ENCODE measurements at regions of chr14 and their contacts with region 1.

Region 1: GRCh38 chr14:73283608-73284379 is 46.5 kb downstream of the PAPLN start:
- DNase-seq: peak; percentile 18
- H3K4me3 ChIP-seq: no peak overlapping the region
- CTCF ChIP-seq: peak; percentile 61

Region 2: GRCh38 chr14:73223049-73223448 is 60.7 kb before region 1 on chr14:
- in situ Hi-C with region 1: no loop called
- DNase-seq: no peak
- H3K4me3 ChIP-seq: no peak overlapping the region
- CTCF ChIP-seq: no peak

Region 3: DNA sequence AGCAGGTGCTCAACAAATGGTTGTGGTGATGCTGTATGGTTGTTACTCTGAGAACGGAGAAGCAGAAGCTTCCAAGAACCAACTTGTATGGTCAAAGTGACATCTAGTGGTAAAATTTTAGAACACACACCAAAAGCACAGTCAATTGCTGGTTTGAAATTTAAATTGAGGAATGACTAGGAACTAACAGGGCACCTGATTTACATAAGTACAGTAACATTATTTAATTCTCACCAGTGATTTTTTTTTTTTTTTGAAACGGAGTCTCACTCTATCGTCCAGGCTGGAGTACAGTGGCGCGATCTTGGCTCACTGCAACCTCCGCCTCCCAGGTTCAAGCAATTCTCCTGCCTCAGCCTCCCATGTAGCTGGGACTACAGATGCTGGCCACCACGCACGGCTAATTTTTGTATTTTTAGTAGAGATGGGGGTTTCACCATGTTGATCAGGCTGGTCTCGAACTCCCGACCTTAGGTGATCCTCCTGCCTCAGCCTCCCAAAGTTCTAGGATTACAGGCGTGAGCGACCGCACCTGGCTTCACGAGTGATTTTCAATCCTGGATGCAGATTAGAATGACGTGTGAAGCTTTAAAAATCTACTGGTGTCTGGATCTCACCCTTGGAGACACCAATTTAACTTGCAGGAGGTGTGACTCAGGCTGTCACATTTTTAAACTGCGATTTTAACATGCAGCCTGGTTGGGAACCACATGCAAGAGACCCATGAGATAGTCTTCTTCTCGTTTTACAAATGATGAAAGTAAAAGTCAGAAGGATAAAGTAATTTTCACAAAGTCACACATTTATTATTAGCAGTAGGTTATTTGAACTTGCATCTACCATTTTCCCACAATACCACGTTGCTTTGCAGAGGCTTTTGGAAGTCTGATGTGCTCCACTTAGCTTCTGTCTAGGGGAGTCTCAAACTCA is 188.7 kb after region 1 on chr14:
- in situ Hi-C with region 1: loop called (anchors 10 kb)
- DNase-seq: peak; percentile 70
- H3K4me3 ChIP-seq: no peak overlapping the region
- CTCF ChIP-seq: peak; percentile 46